ENCODE measurements at regions of chr11 and their contacts with region 1.

Region 1: GRCh38 chr11:34357701-34358257 is at the start of gene ABTB2:
- DNase-seq: peak; percentile 95 to 98 (median 96)
- H3K4me3 ChIP-seq: peak within 1 kb of the TSS; percentile 14 to 79
- H3K4me3 Mint-ChIP-seq: peak within 1 kb of the TSS; percentile 86 to 96 (median 92)
- H3K27ac ChIP-seq: peak within 1 kb of the TSS; percentile 34
- H3K27ac Mint-ChIP-seq: peak within 1 kb of the TSS; percentile 58 to 94 (median 92)
- H3K4me1 ChIP-seq: peaks cover 26% of the 10 kb centered on the region
- H3K4me1 Mint-ChIP-seq: peaks cover 10 to 23% (median 19%) of the 10 kb centered on the region in 4 donors
- H3K27me3 ChIP-seq: peaks cover 28% of the 10 kb centered on the region
- H3K27me3 Mint-ChIP-seq: peaks cover 35 to 38% of the 10 kb centered on the region in 2 donors
- total RNA-seq, gene ABTB2: 0.35 to 0.39 TPM

Region 2: DNA sequence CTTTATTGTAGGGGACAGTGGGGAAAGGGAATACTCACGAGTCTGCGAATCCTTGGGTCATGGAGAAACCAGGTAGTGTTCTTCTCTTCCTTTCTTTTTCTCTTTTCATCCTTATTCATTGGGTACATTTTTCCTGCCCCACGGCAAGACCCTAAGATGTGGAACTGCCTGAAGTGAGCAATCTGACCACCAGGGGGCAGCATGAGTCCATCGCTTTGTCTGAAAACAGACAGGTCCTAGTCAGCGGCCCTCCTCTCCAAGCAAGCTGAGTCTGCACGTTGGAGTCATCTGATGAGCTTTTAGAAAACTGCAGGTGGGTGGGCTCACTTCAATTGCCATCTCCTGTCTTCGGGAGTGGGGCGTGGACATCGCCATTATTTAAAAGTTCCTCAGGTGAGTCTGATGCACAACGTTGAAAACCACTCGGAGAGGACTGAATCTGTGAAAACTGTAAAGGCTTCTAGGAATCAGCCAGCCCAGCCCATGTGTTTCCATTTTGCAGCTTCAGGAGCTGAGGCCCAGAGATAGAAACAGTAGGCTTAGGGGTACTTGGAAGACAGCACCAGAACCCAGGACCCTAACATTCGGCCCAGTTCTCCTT is 549.5 kb before region 1 on chr11:
- CTCF ChIA-PET with region 1: interaction called, 10 read pairs
- POLR2A ChIA-PET with region 1: no interaction called
- intact Hi-C with region 1: loop called (anchors 1 kb)
- DNase-seq: peak; percentile 68 to 77 (median 74)
- H3K4me3 ChIP-seq: no peak overlapping the region
- H3K4me3 Mint-ChIP-seq: no peak overlapping the region
- H3K27ac ChIP-seq: no peak overlapping the region
- H3K27ac Mint-ChIP-seq: no peak overlapping the region
- H3K4me1 ChIP-seq: no peaks in the 10 kb centered on the region
- H3K4me1 Mint-ChIP-seq: peaks cover 0 to 2% (median under 1%) of the 10 kb centered on the region in 4 donors
- H3K27me3 ChIP-seq: no peaks in the 10 kb centered on the region
- H3K27me3 Mint-ChIP-seq: peaks cover 10 to 11% of the 10 kb centered on the region in 2 donors

Region 3: GRCh38 chr11:34051349-34052035 is 306.3 kb before region 1 on chr11 and contains the start of gene CAPRIN1:
- CTCF ChIA-PET with region 1: interaction called, 4 read pairs
- POLR2A ChIA-PET with region 1: interaction called, 25 read pairs
- intact Hi-C with region 1: loop called (anchors 1 kb)
- DNase-seq: peak; percentile 88 to 94 (median 91)
- H3K4me3 ChIP-seq: peak within 1 kb of the TSS; percentile 84 to 97
- H3K4me3 Mint-ChIP-seq: peak within 1 kb of the TSS; percentile 95 to 99 (median 97)
- H3K27ac ChIP-seq: peak within 1 kb of the TSS; percentile 97
- H3K27ac Mint-ChIP-seq: peak within 1 kb of the TSS; percentile 95 to 99 (median 97)
- H3K4me1 ChIP-seq: peaks cover 34% of the 10 kb centered on the region
- H3K4me1 Mint-ChIP-seq: peaks cover 14 to 40% (median 23%) of the 10 kb centered on the region in 4 donors
- H3K27me3 ChIP-seq: no peaks in the 10 kb centered on the region
- H3K27me3 Mint-ChIP-seq: no peaks in the 10 kb centered on the region
- total RNA-seq, gene CAPRIN1: 160 to 176 TPM

Region 4: DNA sequence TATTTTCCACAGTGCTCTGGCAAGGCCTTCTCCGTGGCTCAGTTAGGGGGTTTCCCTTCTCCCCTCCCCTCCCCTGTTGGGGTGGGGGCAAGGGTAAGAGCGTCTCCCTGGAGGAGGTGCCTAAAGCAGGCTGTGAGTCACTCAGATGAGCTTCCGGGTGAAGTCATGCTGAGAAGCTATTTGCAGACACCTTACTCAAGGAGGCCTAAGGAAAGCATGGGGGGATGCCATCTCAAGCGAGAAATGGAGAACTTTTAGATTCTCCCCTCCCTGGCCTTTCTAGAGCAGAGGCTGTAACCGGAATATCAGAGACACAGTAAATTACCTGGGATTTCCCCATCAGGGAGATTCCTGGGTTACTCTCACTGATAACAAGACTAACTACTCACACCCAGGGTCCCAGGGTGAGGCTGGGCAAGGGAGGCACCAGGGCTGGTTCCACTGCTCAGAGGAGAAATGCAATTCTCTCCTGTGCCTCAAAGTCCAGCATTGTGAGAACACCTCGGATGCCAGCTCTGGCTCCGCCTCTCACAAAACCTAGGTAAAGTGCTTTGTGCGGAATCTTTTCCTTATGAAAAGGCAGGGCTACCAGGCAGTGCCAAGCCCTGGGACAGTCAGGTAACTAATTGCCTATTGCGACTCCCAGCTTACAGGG is 123.6 kb before region 1 on chr11:
- CTCF ChIA-PET with region 1: interaction called, 3 read pairs
- POLR2A ChIA-PET with region 1: interaction called, 4 read pairs
- intact Hi-C with region 1: loop called (anchors 2 kb)
- DNase-seq: peak; percentile 56 to 96 (median 68)
- H3K4me3 ChIP-seq: no peak overlapping the region
- H3K4me3 Mint-ChIP-seq: peak overlapping the region in 4 of 8 donors; percentile 22 to 71 (median 36)
- H3K27ac ChIP-seq: no peak overlapping the region
- H3K27ac Mint-ChIP-seq: peak overlapping the region in 6 of 7 donors; percentile 24 to 83 (median 80)
- H3K4me1 ChIP-seq: peaks cover 22% of the 10 kb centered on the region
- H3K4me1 Mint-ChIP-seq: peaks cover 12 to 32% (median 19%) of the 10 kb centered on the region in 4 donors
- H3K27me3 ChIP-seq: no peaks in the 10 kb centered on the region
- H3K27me3 Mint-ChIP-seq: peaks cover 0 to 6% of the 10 kb centered on the region in 2 donors

Region 5: DNA sequence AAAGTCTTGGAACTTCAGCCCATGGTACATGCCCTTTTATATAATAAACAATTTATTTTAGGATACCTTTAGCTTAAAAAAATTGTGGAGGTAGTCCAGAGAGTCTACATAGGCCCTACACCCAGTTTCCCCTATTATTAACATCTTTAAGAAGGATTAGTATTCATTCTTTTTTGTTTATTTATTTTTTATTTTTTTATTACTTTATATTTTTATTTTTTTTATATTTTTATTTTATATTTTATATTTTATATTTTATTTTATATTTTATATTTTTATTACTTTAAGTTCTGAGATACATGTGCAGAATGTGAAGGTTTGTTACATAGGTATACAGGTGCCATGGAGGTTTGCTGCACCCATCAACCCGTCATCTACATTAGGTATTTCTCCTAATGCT is 15.9 kb after region 1 on chr11:
- CTCF ChIA-PET with region 1: no interaction called
- POLR2A ChIA-PET with region 1: no interaction called
- intact Hi-C with region 1: no loop called
- DNase-seq: no peak
- H3K4me3 ChIP-seq: no peak overlapping the region
- H3K4me3 Mint-ChIP-seq: no peak overlapping the region
- H3K27ac ChIP-seq: no peak overlapping the region
- H3K27ac Mint-ChIP-seq: no peak overlapping the region
- H3K4me1 ChIP-seq: no peaks in the 10 kb centered on the region
- H3K4me1 Mint-ChIP-seq: no peaks in the 10 kb centered on the region
- H3K27me3 ChIP-seq: no peaks in the 10 kb centered on the region
- H3K27me3 Mint-ChIP-seq: peaks cover 5% of the 10 kb centered on the region in 2 donors

Region 6: GRCh38 chr11:34438529-34439507 is 81.0 kb after region 1 on chr11 and contains the start of gene CAT:
- CTCF ChIA-PET with region 1: interaction called, 4 read pairs
- POLR2A ChIA-PET with region 1: interaction called, 10 read pairs
- intact Hi-C with region 1: loop called (anchors 1 kb)
- DNase-seq: peak; percentile 96 to 97 (median 96)
- H3K4me3 ChIP-seq: peak within 1 kb of the TSS; percentile 52 to 90
- H3K4me3 Mint-ChIP-seq: peak within 1 kb of the TSS; percentile 94 to 99 (median 98)
- H3K27ac ChIP-seq: peak within 1 kb of the TSS; percentile 75
- H3K27ac Mint-ChIP-seq: peak within 1 kb of the TSS; percentile 93 to 98 (median 95)
- H3K4me1 ChIP-seq: peaks cover 28% of the 10 kb centered on the region
- H3K4me1 Mint-ChIP-seq: peaks cover 22 to 41% (median 31%) of the 10 kb centered on the region in 4 donors
- H3K27me3 ChIP-seq: no peaks in the 10 kb centered on the region
- H3K27me3 Mint-ChIP-seq: no peaks in the 10 kb centered on the region
- total RNA-seq, gene CAT: 35.1 to 38.4 TPM

Measured in CD4-positive, alpha-beta memory T cell (primary cell).